ENCODE measurements at regions of chr10 and their contacts with region 1.

Region 1: DNA sequence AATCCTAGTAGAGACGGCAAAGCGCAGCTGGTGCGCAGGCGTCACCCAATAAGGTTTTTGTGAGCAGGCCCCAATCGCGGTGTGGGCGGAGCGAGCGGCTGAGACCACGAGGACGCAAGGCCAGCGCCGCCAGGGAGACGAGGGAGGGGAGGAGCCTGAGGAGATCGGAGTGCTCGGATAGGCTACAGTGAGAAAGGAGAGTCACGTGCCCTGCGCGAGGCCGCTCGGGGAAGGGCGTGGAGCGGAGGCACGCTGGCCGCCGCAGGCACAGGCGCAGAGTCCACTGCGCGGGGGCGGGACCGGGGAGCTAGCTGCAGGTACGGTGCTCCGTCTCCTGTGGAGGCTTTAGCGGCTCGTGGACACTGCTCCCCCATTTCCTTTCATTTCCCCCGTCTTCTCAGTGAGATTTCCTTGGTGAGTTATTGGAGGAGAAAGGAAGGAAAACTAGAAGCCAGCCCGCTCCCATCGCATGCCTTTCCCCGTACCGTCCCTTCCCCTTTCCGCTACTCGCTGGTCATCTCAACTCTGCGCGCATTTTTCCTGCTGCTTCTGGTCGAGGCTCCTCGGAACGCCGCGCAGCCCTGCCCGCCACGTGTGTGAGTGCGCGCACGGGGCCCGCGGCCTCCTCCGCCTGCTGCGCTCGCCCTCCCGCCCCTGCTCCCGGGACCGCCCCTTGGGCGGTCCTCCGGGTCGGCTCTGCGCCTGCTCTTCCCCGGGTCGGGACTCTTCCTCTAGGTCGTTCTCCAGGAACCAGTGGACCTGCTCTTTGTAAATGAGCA is at the start of gene THNSL1:
- DNase-seq: peak; percentile 99
- ATAC-seq: peak; percentile 100
- H3K4me3 ChIP-seq: peak within 1 kb of the TSS; percentile 44 to 84
- H3K27ac ChIP-seq: peak within 1 kb of the TSS; percentile 78 to 94
- H3K4me1 ChIP-seq: peaks cover 0 to 1% of the 10 kb centered on the region in 2 donors
- H3K27me3 ChIP-seq: no peaks in the 10 kb centered on the region
- total RNA-seq, gene THNSL1: 1.2 to 2.0 TPM

Region 2: GRCh38 chr10:25059764-25060389 is 43.3 kb after region 1 on chr10:
- intact Hi-C with region 1: loop called in 1 of 2 experiments (anchors 2 kb)
- DNase-seq: peak; percentile 86 to 88
- ATAC-seq: peak; percentile 86
- H3K4me3 ChIP-seq: no peak overlapping the region
- H3K27ac ChIP-seq: no peak overlapping the region
- H3K4me1 ChIP-seq: peaks cover 2 to 3% of the 10 kb centered on the region in 2 donors
- H3K27me3 ChIP-seq: no peaks in the 10 kb centered on the region

Region 3: GRCh38 chr10:25080880-25081581 is 64.5 kb after region 1 on chr10:
- intact Hi-C with region 1: loop called (anchors 1 to 5 kb)
- DNase-seq: peak; percentile 87 to 90
- ATAC-seq: peak; percentile 93
- H3K4me3 ChIP-seq: no peak overlapping the region
- H3K27ac ChIP-seq: peak overlapping the region in 1 of 2 donors; percentile 79
- H3K4me1 ChIP-seq: peaks cover 1 to 10% of the 10 kb centered on the region in 2 donors
- H3K27me3 ChIP-seq: no peaks in the 10 kb centered on the region

Region 4: DNA sequence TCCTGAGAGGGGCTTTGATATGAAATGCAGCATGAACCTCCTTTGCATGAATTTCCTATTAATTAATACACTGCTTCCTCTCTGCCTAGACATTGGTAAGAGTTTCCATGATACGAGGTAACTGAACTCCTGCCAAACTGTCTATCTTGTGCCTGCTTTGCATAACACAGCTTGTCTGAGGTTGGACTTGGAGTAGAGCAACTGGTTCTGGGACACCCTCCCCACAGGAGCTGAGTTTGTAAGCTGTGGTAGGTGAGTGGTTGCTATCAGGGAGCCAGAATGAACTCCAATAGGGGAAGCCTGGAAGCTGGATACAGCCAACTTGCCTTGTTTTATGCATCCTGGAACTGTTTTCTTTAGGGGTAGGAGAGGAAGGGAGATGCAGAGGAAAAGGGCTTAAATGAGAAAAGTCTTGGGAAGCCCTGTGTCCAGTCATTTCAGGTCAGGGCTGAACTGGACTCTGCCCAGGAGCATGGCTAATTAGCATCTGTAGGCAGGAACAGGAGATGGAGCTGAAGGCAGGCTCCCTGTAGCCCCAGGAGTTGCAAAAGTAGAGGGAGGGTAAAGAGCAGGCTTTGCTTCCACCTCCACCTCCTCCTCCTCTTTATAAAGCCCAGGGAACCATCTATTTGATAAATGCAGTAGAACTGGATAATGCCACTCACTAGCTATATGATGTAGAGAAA is 85.0 kb after region 1 on chr10:
- intact Hi-C with region 1: no loop called
- DNase-seq: no peak
- ATAC-seq: no peak
- H3K4me3 ChIP-seq: no peak overlapping the region
- H3K27ac ChIP-seq: no peak overlapping the region
- H3K4me1 ChIP-seq: no peaks in the 10 kb centered on the region
- H3K27me3 ChIP-seq: no peaks in the 10 kb centered on the region

Region 5: DNA sequence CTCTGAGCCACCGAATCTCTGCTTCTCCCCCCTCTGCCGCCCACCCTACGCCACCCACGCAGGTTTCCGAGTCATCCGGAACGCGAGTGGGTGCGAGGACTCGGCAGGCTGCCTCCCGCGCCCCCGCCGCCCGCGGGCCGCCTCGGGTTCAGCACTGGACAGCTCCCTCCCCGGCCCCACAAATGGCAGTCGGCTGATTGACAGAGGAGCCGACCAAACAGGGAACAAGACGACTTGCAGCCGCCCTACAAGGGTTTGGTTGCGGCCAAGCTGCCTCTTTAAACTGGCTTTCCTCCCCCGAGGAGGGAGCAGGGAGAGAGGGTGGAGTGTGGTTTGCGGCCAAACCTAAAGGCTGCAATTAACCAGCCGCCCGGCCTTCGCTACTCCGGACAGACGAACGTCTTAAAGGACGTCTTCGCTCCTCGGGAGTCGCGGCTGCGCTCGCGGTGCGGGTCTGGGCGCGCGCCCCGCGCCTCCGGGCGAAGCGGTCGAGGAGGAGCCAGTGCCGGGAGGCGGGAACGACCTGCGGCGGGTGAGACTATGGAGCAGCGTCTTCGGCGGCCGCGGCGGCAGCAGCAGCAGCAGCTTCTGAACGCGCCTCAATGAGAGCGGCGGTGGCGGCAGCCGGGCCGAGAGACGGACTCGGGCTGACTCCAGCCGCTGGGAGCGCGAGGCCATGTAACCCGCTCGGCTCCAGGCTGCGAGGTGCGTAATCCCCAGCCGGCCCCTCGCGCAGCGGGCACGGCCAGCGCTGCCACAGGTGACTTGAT is 158.1 kb after region 1 on chr10 and contains the start of gene GPR158:
- intact Hi-C with region 1: loop called in 1 of 2 experiments (anchors 10 kb)
- DNase-seq: peak; percentile 92 to 94
- ATAC-seq: peak; percentile 93
- H3K4me3 ChIP-seq: peak within 1 kb of the TSS in 1 of 2 donors; percentile 28
- H3K27ac ChIP-seq: no peak within 1 kb of the TSS
- H3K4me1 ChIP-seq: no peaks in the 10 kb centered on the region
- H3K27me3 ChIP-seq: peaks cover 0 to 5% of the 10 kb centered on the region in 2 donors
- total RNA-seq, gene GPR158: 0.42 TPM in 1 of 2 donors, not detected in the other

Measured in aorta (tissue), 5 donors.